ENCODE measurements at regions of chr13 and their contacts with region 1.

Region 1: GRCh38 chr13:30593001-30593400 is 24.7 kb upstream of the USPL1 start:
- DNase-seq: no peak
- ATAC-seq: no peak
- H3K4me3 ChIP-seq: no peak overlapping the region
- H3K4me3 Mint-ChIP-seq: no peak overlapping the region
- H3K27ac ChIP-seq: no peak overlapping the region
- H3K27ac Mint-ChIP-seq: no peak overlapping the region
- H3K4me1 ChIP-seq: no peaks in the 10 kb centered on the region
- H3K4me1 Mint-ChIP-seq: no peaks in the 10 kb centered on the region
- H3K27me3 ChIP-seq: no peaks in the 10 kb centered on the region
- H3K27me3 Mint-ChIP-seq: peaks cover 2% of the 10 kb centered on the region
- CTCF ChIP-seq: no peak

Region 2: DNA sequence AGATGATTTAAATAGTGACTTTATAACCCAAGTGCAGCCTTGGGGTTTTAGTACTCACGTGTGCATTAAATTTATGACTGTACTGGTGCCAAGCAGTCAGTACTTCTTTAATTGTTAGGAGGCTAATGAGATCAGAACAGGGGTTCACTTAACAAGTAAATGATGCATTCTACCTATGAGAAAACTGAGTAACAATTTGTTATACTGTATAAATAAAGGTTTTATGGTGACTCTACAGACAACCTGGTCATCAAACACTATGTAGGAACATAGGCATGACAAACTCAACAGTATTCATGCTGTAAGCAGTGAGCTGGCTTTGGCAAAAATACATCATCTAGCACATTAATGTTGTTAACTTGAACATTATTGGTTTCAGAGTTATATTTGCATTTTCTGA is 818.2 kb before region 1 on chr13:
- CTCF ChIA-PET with region 1: no interaction called
- POLR2A ChIA-PET with region 1: no interaction called
- intact Hi-C with region 1: no loop called
- DNase-seq: no peak
- ATAC-seq: no peak
- H3K4me3 ChIP-seq: no peak overlapping the region
- H3K4me3 Mint-ChIP-seq: no peak overlapping the region
- H3K27ac ChIP-seq: no peak overlapping the region
- H3K27ac Mint-ChIP-seq: no peak overlapping the region
- H3K4me1 ChIP-seq: no peaks in the 10 kb centered on the region
- H3K4me1 Mint-ChIP-seq: peaks cover 12% of the 10 kb centered on the region
- H3K27me3 ChIP-seq: no peaks in the 10 kb centered on the region
- H3K27me3 Mint-ChIP-seq: no peaks in the 10 kb centered on the region
- CTCF ChIP-seq: no peak

Region 3: DNA sequence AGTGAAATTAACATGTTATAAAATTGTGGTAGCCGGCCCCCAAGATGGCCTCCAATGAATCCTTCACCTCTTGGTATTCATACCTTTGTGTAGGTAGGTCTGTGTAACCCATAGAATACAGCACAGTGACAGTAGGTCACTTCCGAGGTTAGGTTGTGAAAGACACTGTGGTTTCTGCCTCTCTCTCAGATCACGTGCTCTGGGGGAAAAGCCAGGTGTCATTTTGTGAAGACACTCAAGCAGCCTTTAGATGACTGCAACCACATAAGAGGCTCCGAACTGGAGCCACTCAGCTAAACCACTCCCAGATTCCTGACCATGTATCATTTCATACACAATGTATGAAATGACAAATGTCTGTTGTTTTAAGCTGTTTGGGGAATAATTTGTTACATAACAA is 14.9 kb after region 1 on chr13:
- CTCF ChIA-PET with region 1: no interaction called
- POLR2A ChIA-PET with region 1: no interaction called
- intact Hi-C with region 1: loop called in 1 of 2 experiments (anchors 2 kb)
- DNase-seq: peak; percentile 34 to 92 (median 65)
- ATAC-seq: peak; percentile 94
- H3K4me3 ChIP-seq: no peak overlapping the region
- H3K4me3 Mint-ChIP-seq: peak overlapping the region; percentile 50
- H3K27ac ChIP-seq: peak overlapping the region in 1 of 2 experiments; percentile 38
- H3K27ac Mint-ChIP-seq: peak overlapping the region; percentile 84
- H3K4me1 ChIP-seq: peaks cover 17% of the 10 kb centered on the region
- H3K4me1 Mint-ChIP-seq: peaks cover 35% of the 10 kb centered on the region
- H3K27me3 ChIP-seq: no peaks in the 10 kb centered on the region
- H3K27me3 Mint-ChIP-seq: no peaks in the 10 kb centered on the region
- CTCF ChIP-seq: no peak

Region 4: GRCh38 chr13:30673669-30674521 is 80.9 kb after region 1 on chr13:
- CTCF ChIA-PET with region 1: no interaction called
- POLR2A ChIA-PET with region 1: no interaction called
- intact Hi-C with region 1: no loop called
- DNase-seq: peak; percentile 82 to 95 (median 87)
- ATAC-seq: peak; percentile 91
- H3K4me3 ChIP-seq: peak overlapping the region; percentile 63
- H3K4me3 Mint-ChIP-seq: peak overlapping the region; percentile 88
- H3K27ac ChIP-seq: peak overlapping the region; percentile 44 to 68
- H3K27ac Mint-ChIP-seq: peak overlapping the region; percentile 92
- H3K4me1 ChIP-seq: peaks cover 7% of the 10 kb centered on the region
- H3K4me1 Mint-ChIP-seq: peaks cover 25% of the 10 kb centered on the region
- H3K27me3 ChIP-seq: no peaks in the 10 kb centered on the region
- H3K27me3 Mint-ChIP-seq: no peaks in the 10 kb centered on the region
- CTCF ChIP-seq: no peak

Region 5: DNA sequence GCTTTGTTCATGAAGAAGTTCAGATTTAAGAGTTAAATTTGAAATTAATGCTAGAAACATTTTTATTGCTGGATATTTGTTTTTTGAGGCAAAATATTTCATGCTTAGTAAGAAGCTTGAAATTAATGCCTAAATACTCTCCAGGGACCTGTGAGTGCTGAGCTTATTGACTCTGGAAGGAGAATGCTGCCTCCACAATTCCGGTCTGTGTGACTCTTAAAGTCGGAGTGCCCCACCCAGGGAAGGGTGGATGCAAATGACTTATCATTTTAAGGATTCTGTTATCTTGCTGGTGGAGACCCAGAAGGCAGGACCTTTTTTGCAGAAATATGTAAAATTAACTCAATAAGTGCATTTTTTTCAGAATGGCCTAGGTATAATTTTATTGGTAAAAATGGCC is 1002.6 kb after region 1 on chr13:
- CTCF ChIA-PET with region 1: no interaction called
- POLR2A ChIA-PET with region 1: no interaction called
- intact Hi-C with region 1: no loop called
- DNase-seq: no peak
- ATAC-seq: no peak
- H3K4me3 ChIP-seq: no peak overlapping the region
- H3K4me3 Mint-ChIP-seq: no peak overlapping the region
- H3K27ac ChIP-seq: no peak overlapping the region
- H3K27ac Mint-ChIP-seq: no peak overlapping the region
- H3K4me1 ChIP-seq: no peaks in the 10 kb centered on the region
- H3K4me1 Mint-ChIP-seq: no peaks in the 10 kb centered on the region
- H3K27me3 ChIP-seq: no peaks in the 10 kb centered on the region
- H3K27me3 Mint-ChIP-seq: no peaks in the 10 kb centered on the region
- CTCF ChIP-seq: no peak